Dendritic cell treated with granulocyte-macrophage colony-stimulating factor and Interleukin-4, amounts not matched to agents 40 ng/mL and 50 ng/mL, for 4 days (primary cell): ENCODE measurements at regions of chr10 and their contacts with region 1.

Region 1: GRCh38 chr10:132307823-132308587 is at the start of gene STK32C:
- H3K4me3 Mint-ChIP-seq: peak within 1 kb of the TSS; percentile 93
- H3K27ac Mint-ChIP-seq: peak within 1 kb of the TSS; percentile 78
- H3K4me1 Mint-ChIP-seq: peaks cover 69% of the 10 kb centered on the region
- H3K27me3 Mint-ChIP-seq: peaks cover 33% of the 10 kb centered on the region

Region 2: GRCh38 chr10:132229834-132230556 is 78.0 kb before region 1 on chr10:
- intact Hi-C with region 1: loop called (anchors 5 kb)
- H3K4me3 Mint-ChIP-seq: peak overlapping the region; percentile 60
- H3K27ac Mint-ChIP-seq: no peak overlapping the region
- H3K4me1 Mint-ChIP-seq: no peaks in the 10 kb centered on the region
- H3K27me3 Mint-ChIP-seq: no peaks in the 10 kb centered on the region

Region 3: DNA sequence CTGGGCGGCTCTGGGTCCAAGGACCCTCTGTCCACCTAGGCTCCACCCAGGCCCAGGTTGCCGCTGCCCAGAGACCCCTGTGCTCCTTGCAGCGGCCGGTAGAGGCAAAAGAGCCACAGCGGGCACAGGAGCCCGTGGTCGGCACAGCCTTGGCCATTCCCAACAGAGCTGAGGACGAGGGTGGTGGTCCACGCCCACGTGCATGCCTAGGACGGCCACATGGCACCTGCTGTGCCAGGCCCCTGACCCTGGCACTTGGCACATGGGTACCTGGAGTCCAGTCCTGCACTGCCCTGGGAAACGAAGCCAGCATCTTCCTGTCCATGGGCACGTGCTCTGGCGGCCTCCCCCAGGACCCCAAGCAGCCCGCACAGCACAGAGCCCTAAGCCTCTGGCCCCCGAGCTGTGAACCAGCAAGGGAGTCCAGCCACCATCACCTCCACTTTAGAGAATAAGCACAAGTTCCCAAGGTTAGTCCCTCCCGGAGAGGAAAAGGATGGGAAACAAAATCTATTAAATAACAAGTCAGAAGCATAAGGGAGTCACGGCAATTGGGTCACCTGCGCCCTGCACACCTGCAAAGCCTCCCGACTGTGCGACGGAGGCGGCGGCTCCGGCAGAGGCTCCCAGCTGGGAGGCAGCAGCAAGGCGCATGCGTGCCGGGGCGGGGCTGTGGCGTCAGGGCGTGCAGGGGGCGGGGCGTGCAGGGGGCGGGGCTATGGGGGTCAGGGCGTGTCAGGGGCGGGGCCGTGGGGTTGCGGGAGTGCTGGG is 59.4 kb before region 1 on chr10:
- intact Hi-C with region 1: loop called (anchors 5 kb)
- H3K4me3 Mint-ChIP-seq: peak overlapping the region; percentile 61
- H3K27ac Mint-ChIP-seq: no peak overlapping the region
- H3K4me1 Mint-ChIP-seq: peaks cover 40% of the 10 kb centered on the region
- H3K27me3 Mint-ChIP-seq: peaks cover 7% of the 10 kb centered on the region